ENCODE measurements at regions of chr12 and their contacts with region 1.

Region 1: GRCh38 chr12:751192-751998 is 984 bp upstream of the WNK1 start:
- DNase-seq: peak; percentile 97
- H3K4me3 ChIP-seq: peak overlapping the region; percentile 35 to 62 (median 48)
- H3K27ac ChIP-seq: peak overlapping the region; percentile 41
- H3K4me1 ChIP-seq: peaks cover 26% of the 10 kb centered on the region
- H3K27me3 ChIP-seq: no peaks in the 10 kb centered on the region
- CTCF ChIP-seq: peak; percentile 79 to 86
- POLR2A ChIP-seq: peak; percentile 62

Region 2: GRCh38 chr12:569803-570434 is 181.5 kb before region 1 on chr12:
- CTCF ChIA-PET with region 1: interaction called, 182 read pairs
- POLR2A ChIA-PET with region 1: interaction called, 6 read pairs
- dilution Hi-C with region 1: no loop called
- intact Hi-C with region 1: loop called (anchors 1 kb)
- DNase-seq: peak; percentile 58
- H3K4me3 ChIP-seq: peak overlapping the region; percentile 36 to 81 (median 67)
- H3K27ac ChIP-seq: peak overlapping the region; percentile 77
- H3K4me1 ChIP-seq: peaks cover 23% of the 10 kb centered on the region
- H3K27me3 ChIP-seq: peaks cover 2 to 3% of the 10 kb centered on the region in 2 experiments
- CTCF ChIP-seq: peak; percentile 79 to 97
- POLR2A ChIP-seq: no peak

Region 3: DNA sequence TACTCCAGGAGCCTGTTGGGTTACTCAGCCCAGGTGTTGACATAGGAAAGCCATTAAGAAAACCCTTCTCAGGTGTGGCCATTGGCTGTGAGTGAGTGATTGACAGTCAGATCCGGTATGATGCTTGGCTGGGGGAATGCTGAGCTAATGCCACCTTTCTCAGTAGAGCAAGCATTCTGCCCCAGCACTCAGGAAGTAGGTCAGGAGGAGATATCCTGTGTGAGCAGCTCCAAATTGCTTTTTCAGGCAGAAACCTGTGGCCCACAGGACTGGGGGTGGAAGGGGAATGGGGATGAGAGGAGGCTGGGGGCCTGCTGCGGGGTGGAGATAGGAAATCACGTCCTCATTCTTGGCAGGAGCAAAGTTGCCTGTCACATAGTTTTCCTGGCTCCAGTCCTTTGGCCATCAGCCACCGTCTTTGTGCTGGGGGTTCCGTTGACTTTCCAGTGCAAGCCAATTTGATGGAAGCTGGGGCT is 143.8 kb before region 1 on chr12:
- CTCF ChIA-PET with region 1: interaction called, 121 read pairs
- POLR2A ChIA-PET with region 1: no interaction called
- dilution Hi-C with region 1: no loop called
- intact Hi-C with region 1: loop called (anchors 1 kb)
- DNase-seq: peak; percentile 88
- H3K4me3 ChIP-seq: no peak overlapping the region
- H3K27ac ChIP-seq: peak overlapping the region; percentile 2
- H3K4me1 ChIP-seq: peaks cover 28% of the 10 kb centered on the region
- H3K27me3 ChIP-seq: no peaks in the 10 kb centered on the region
- CTCF ChIP-seq: no peak
- POLR2A ChIP-seq: no peak

Region 4: GRCh38 chr12:630656-631632 is 120.5 kb before region 1 on chr12:
- CTCF ChIA-PET with region 1: interaction called, 13 read pairs
- POLR2A ChIA-PET with region 1: no interaction called
- dilution Hi-C with region 1: no loop called
- intact Hi-C with region 1: no loop called
- DNase-seq: peak; percentile 28
- H3K4me3 ChIP-seq: no peak overlapping the region
- H3K27ac ChIP-seq: peak overlapping the region; percentile 89
- H3K4me1 ChIP-seq: peaks cover 28% of the 10 kb centered on the region
- H3K27me3 ChIP-seq: no peaks in the 10 kb centered on the region
- CTCF ChIP-seq: no peak
- POLR2A ChIP-seq: no peak

Region 5: GRCh38 chr12:726281-727140 is 24.9 kb before region 1 on chr12:
- CTCF ChIA-PET with region 1: interaction called, 15 read pairs
- POLR2A ChIA-PET with region 1: no interaction called
- dilution Hi-C with region 1: no loop called
- intact Hi-C with region 1: no loop called
- DNase-seq: no peak
- H3K4me3 ChIP-seq: no peak overlapping the region
- H3K27ac ChIP-seq: no peak overlapping the region
- H3K4me1 ChIP-seq: no peaks in the 10 kb centered on the region
- H3K27me3 ChIP-seq: no peaks in the 10 kb centered on the region
- CTCF ChIP-seq: no peak
- POLR2A ChIP-seq: no peak

Region 6: GRCh38 chr12:810671-811415 is 59.4 kb after region 1 on chr12:
- CTCF ChIA-PET with region 1: interaction called, 129 read pairs
- POLR2A ChIA-PET with region 1: interaction called, 3 read pairs
- dilution Hi-C with region 1: no loop called
- intact Hi-C with region 1: loop called (anchors 1 kb)
- DNase-seq: no peak
- H3K4me3 ChIP-seq: no peak overlapping the region
- H3K27ac ChIP-seq: no peak overlapping the region
- H3K4me1 ChIP-seq: peaks cover 13% of the 10 kb centered on the region
- H3K27me3 ChIP-seq: no peaks in the 10 kb centered on the region
- CTCF ChIP-seq: no peak
- POLR2A ChIP-seq: no peak

Region 7: GRCh38 chr12:920676-921075 is 169.3 kb after region 1 on chr12:
- CTCF ChIA-PET with region 1: no interaction called
- POLR2A ChIA-PET with region 1: no interaction called
- dilution Hi-C with region 1: no loop called
- intact Hi-C with region 1: no loop called
- DNase-seq: no peak
- H3K4me3 ChIP-seq: no peak overlapping the region
- H3K27ac ChIP-seq: no peak overlapping the region
- H3K4me1 ChIP-seq: no peaks in the 10 kb centered on the region
- H3K27me3 ChIP-seq: no peaks in the 10 kb centered on the region
- CTCF ChIP-seq: no peak
- POLR2A ChIP-seq: no peak